ENCODE measurements at regions of chr7 and their contacts with region 1.

Region 1: GRCh38 chr7:138063400-138063799 is 12.9 kb upstream of the AKR1D1 start:
- DNase-seq: no peak
- ATAC-seq: no peak
- H3K4me3 ChIP-seq: no peak overlapping the region
- H3K27ac ChIP-seq: no peak overlapping the region
- H3K4me1 ChIP-seq: no peaks in the 10 kb centered on the region
- H3K27me3 ChIP-seq: no peaks in the 10 kb centered on the region
- CTCF ChIP-seq: no peak
- EP300 ChIP-seq: no peak
- POLR2A ChIP-seq: no peak
- RAD21 ChIP-seq: no peak

Region 2: DNA sequence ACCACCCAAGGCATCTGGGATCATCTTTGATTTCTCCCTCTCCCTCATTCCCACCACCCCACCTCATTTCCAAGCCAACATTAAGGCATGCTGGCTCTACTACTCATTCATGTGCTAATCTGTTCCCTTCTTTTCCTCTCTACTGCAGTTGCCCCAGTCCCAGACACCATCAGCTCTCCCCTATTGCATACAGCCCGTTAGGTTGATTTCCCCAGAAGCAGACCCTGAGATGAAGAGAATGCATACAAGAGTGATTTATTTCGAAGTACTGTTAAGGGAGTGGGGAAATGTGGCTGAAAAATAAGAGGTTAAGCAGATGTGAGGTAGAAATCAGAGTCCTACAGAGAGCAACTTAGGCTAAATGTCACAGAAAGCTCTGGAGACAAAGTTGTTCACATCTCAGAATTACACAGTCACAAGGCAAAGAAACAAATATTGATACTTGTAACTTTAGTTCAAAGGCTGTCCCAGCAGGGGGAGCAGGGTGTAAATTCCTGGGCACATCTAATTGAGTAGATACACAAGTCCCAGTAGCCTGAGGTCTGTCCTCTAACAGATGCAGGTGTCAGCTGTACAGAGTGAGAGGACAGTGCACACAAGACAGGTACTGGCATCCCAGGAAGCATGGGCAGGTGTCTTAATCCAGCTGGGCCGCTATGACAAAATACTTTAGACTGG is 33.8 kb after region 1 on chr7:
- CTCF ChIA-PET with region 1: no interaction called
- POLR2A ChIA-PET with region 1: interaction called, 3 read pairs
- in situ Hi-C with region 1: no loop called
- intact Hi-C with region 1: loop called (anchors 1 kb)
- DNase-seq: peak; percentile 36 to 60 (median 46)
- ATAC-seq: peak; percentile 86
- H3K4me3 ChIP-seq: no peak overlapping the region
- H3K27ac ChIP-seq: no peak overlapping the region
- H3K4me1 ChIP-seq: no peaks in the 10 kb centered on the region
- H3K27me3 ChIP-seq: peaks cover 0 to 1% of the 10 kb centered on the region in 2 experiments; a peak in 3 of 5 replicates
- CTCF ChIP-seq: peak; percentile 50 to 60 (median 57)
- EP300 ChIP-seq: no peak
- POLR2A ChIP-seq: no peak
- RAD21 ChIP-seq: peak; percentile 50 to 65